ENCODE measurements at regions of chr1 and their contacts with region 1.

Region 1: DNA sequence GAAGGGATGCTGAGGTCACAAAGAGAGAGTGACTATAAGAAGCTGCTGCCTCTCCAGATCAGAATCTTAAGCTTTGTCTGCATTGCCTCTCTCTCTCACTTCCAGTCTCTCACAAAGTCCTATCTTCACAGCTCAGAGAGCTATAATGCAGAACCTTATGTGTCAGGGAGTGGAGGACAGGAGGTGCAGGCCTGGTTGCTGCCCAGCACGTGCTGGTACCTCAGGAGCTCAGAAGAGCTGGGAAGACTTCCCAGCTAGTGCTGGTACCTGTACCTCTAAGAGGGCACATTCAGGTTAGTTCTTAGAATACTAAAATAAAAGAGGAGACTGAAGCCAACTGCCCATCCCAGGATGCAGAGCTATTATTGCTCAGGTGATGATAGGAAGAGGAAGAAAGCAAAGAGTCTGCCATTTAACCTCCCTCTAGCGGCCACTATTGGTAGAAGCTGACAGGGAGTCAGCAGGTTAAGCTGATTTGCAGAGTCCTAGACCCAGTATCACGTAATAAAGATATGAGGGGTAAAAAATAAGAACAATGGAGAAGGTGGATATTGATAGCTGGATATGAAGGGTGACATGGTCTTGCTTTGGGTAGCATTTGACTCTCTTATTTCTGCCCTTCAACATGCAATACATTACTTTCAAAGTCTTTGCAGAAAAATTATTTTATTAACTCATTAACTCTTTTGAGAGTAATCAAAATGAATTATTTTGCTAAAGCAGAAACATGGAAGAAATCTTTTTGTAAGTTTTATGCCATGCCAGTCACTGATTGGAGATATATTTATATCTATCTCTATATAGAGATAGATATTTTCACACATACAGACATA is 138.1 kb upstream of the HMCN1 start:
- DNase-seq: peak; percentile 16 to 61 (median 45)
- ATAC-seq: peak; percentile 80
- H3K4me3 ChIP-seq: no peak overlapping the region
- H3K4me3 Mint-ChIP-seq: no peak overlapping the region
- H3K27ac ChIP-seq: no peak overlapping the region
- H3K27ac Mint-ChIP-seq: peak overlapping the region in 5 of 9 donors; percentile 17 to 72 (median 51)
- H3K4me1 ChIP-seq: peaks cover 0 to 5% of the 10 kb centered on the region in 2 donors
- H3K4me1 Mint-ChIP-seq: peaks cover 13 to 36% (median 32%) of the 10 kb centered on the region in 7 donors
- H3K27me3 ChIP-seq: no peaks in the 10 kb centered on the region
- H3K27me3 Mint-ChIP-seq: no peaks in the 10 kb centered on the region

Region 2: GRCh38 chr1:185488808-185489207 is 107.2 kb before region 1 on chr1:
- CTCF ChIA-PET with region 1: interaction called, 3 read pairs
- POLR2A ChIA-PET with region 1: no interaction called
- intact Hi-C with region 1: loop called in 1 of 2 experiments (anchors 5 kb)
- DNase-seq: no peak
- ATAC-seq: no peak
- H3K4me3 ChIP-seq: no peak overlapping the region
- H3K4me3 Mint-ChIP-seq: no peak overlapping the region
- H3K27ac ChIP-seq: no peak overlapping the region
- H3K27ac Mint-ChIP-seq: peak overlapping the region in 4 of 9 donors; percentile 3 to 72 (median 22)
- H3K4me1 ChIP-seq: no peaks in the 10 kb centered on the region
- H3K4me1 Mint-ChIP-seq: peaks cover 0 to 12% (median 6%) of the 10 kb centered on the region in 7 donors
- H3K27me3 ChIP-seq: no peaks in the 10 kb centered on the region
- H3K27me3 Mint-ChIP-seq: no peaks in the 10 kb centered on the region

Region 3: GRCh38 chr1:185541871-185542301 is 54.2 kb before region 1 on chr1:
- CTCF ChIA-PET with region 1: no interaction called
- POLR2A ChIA-PET with region 1: no interaction called
- intact Hi-C with region 1: loop called in 1 of 2 experiments (anchors 10 kb)
- DNase-seq: no peak
- ATAC-seq: no peak
- H3K4me3 ChIP-seq: no peak overlapping the region
- H3K4me3 Mint-ChIP-seq: no peak overlapping the region
- H3K27ac ChIP-seq: no peak overlapping the region
- H3K27ac Mint-ChIP-seq: no peak overlapping the region
- H3K4me1 ChIP-seq: no peaks in the 10 kb centered on the region
- H3K4me1 Mint-ChIP-seq: peaks cover 0 to 14% (median 6%) of the 10 kb centered on the region in 7 donors
- H3K27me3 ChIP-seq: no peaks in the 10 kb centered on the region
- H3K27me3 Mint-ChIP-seq: peaks cover 0 to 5% (median 0%) of the 10 kb centered on the region in 5 donors

Region 4: DNA sequence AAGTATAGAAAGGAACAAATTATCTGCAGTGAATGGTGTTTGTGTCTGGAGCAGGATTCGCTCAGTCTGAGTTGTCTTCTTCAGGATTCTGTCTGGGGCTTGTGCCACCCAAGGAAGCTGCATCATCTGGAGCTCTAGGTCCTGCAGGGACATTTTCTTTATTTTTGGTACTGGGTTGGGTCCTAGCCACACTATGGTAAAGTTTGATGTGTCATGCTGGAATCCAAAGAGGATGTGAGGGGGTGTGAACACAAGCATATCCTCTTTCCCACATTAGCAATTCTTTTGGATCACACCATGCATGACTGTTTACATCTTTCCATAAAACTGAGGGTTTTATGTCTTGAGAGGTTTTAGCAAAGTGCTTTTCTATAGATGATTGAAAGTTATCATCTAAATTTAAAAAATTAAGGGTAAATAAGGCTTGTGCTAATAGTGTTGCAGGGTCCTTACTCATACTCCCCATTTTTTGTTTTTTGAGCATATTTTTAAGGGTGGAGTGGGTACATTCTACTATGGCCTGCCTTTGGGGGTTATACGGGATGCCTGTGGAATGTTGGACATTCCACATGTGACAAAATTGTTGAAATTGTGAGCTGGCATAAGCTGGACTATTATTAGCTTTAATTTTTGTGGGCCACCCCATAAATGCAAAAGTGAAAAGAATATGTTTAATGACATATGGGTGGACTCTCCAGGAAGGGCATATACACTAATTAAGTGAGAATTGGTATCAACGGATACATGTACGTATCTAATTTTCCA is 13.9 kb before region 1 on chr1:
- CTCF ChIA-PET with region 1: interaction called, 3 read pairs
- POLR2A ChIA-PET with region 1: no interaction called
- intact Hi-C with region 1: loop called in 1 of 2 experiments (anchors 1 kb)
- DNase-seq: no peak
- ATAC-seq: no peak
- H3K4me3 ChIP-seq: no peak overlapping the region
- H3K4me3 Mint-ChIP-seq: no peak overlapping the region
- H3K27ac ChIP-seq: no peak overlapping the region
- H3K27ac Mint-ChIP-seq: peak overlapping the region in 1 of 9 donors; percentile 27
- H3K4me1 ChIP-seq: no peaks in the 10 kb centered on the region
- H3K4me1 Mint-ChIP-seq: peaks cover 0 to 2% (median 0%) of the 10 kb centered on the region in 7 donors
- H3K27me3 ChIP-seq: no peaks in the 10 kb centered on the region
- H3K27me3 Mint-ChIP-seq: peaks cover 0 to 4% (median 0%) of the 10 kb centered on the region in 5 donors

Region 5: DNA sequence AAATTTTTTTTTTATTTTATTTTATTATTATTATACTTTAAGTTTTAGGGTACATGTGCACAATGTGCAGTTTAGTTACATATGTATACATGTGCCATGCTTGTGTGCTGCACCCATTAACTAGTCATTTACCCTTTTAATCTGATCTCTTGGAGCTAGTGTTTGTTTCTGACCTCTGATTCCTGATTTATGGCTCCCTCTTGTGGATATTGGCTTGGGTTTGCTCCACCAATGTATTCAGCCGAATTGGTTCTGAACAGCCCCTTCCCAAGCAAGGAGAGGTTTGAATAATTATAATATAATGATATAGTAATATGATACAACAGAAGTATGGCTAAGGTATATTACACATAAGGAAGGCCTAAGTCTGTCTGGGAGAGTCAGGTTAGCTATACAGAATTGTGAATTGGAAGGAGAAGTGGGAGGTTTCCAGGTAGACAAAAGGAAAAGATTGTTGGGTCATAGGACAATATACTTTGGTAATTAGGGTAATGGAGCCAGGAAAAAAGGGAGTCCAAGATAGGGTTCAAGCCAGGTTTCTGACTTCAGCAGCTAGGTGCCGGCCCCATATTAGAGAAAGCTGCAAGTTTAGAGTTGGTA is 85.1 kb after region 1 on chr1:
- CTCF ChIA-PET with region 1: interaction called, 14 read pairs
- POLR2A ChIA-PET with region 1: interaction called, 3 read pairs
- intact Hi-C with region 1: no loop called
- DNase-seq: peak in 6 of 9 donors; percentile 19 to 53 (median 40)
- ATAC-seq: peak; percentile 65
- H3K4me3 ChIP-seq: no peak overlapping the region
- H3K4me3 Mint-ChIP-seq: peak overlapping the region in 2 of 10 donors; percentile 12 to 39
- H3K27ac ChIP-seq: no peak overlapping the region
- H3K27ac Mint-ChIP-seq: peak overlapping the region in 1 of 9 donors; percentile 14
- H3K4me1 ChIP-seq: peaks cover 4 to 13% of the 10 kb centered on the region in 2 donors
- H3K4me1 Mint-ChIP-seq: peaks cover 13 to 41% (median 28%) of the 10 kb centered on the region in 7 donors
- H3K27me3 ChIP-seq: no peaks in the 10 kb centered on the region
- H3K27me3 Mint-ChIP-seq: peaks cover 0 to 16% (median 0%) of the 10 kb centered on the region in 5 donors

Region 6: DNA sequence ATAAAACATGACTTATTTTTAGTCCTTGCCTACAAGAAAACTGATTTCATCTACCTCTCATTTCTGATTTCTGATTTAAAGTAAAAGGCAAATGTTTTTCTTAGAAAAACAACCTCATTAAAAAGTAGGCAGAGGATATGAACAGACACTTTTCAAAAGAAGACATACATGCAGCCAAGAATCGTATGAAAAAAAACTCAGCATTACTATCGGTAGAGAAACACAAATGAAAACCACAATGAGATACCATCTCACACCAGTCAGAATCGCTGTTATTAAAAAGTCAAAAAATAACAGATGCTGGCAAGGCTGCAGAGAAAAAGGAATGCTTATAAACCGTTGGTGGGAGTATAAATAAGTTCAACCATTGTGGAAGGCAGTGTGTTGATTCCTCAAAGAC is 795.8 kb after region 1 on chr1:
- CTCF ChIA-PET with region 1: no interaction called
- POLR2A ChIA-PET with region 1: no interaction called
- intact Hi-C with region 1: no loop called
- DNase-seq: no peak
- ATAC-seq: no peak
- H3K4me3 ChIP-seq: no peak overlapping the region
- H3K4me3 Mint-ChIP-seq: no peak overlapping the region
- H3K27ac ChIP-seq: no peak overlapping the region
- H3K27ac Mint-ChIP-seq: no peak overlapping the region
- H3K4me1 ChIP-seq: no peaks in the 10 kb centered on the region
- H3K4me1 Mint-ChIP-seq: peaks cover 0 to 5% (median 0%) of the 10 kb centered on the region in 7 donors
- H3K27me3 ChIP-seq: no peaks in the 10 kb centered on the region
- H3K27me3 Mint-ChIP-seq: no peaks in the 10 kb centered on the region